ENCODE measurements at regions of chr7 and their contacts with region 1.

Region 1: DNA sequence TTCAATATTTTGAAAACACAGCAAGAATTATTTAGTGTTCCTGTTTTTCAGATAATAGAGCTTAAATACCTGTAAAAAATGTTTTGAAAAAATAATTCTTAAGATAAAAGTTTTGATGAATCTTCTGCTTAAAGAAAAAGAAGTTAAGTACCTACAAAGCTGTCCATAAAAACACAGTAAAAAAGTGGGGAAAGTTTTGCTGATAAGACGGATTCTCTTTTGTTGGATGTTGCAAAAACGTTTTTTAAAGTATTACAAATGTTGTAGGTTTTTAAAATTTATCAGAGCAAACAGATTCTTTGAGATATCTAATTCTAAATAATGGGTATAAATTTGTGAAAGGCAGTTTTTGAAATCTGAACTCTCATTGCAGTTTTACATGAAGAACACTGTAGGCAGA is 12.2 kb downstream of the DMTF1 start:
- DNase-seq: no peak
- H3K4me3 ChIP-seq: no peak overlapping the region
- H3K27ac ChIP-seq: no peak overlapping the region
- H3K4me1 ChIP-seq: peaks cover 0 to 9% (median 3%) of the 10 kb centered on the region in 4 donors
- H3K27me3 ChIP-seq: no peaks in the 10 kb centered on the region
- CTCF ChIP-seq: no peak
- EP300 ChIP-seq: no peak
- POLR2A ChIP-seq: no peak

Region 2: DNA sequence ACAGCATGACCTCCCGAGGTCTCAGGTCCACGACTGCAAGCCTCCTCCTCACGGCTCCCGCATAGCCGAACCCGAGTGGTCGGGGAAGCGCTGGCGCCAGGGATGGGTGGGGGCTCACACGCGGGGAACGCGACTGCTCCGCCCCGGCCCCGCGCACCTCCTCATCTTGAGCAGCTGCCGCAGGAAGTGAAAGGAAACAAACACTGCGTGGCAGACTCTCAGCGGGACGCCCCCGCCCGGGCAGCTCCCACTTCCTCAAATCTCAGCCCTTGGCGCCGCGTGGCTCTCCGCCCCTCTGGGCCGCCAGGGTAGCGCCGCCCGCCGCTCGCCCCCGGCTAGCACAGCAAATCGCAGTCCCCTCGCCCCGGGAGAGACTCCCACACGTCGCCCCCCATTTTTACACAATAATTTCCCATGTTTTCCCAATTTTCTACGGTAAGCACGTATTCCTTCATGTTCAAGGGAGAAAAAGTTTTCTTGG is 55.2 kb after region 1 on chr7 and contains the start of gene TMEM243:
- intact Hi-C with region 1: loop called (anchors 10 kb)
- DNase-seq: peak; percentile 79 to 93
- H3K4me3 ChIP-seq: peak within 1 kb of the TSS; percentile 71 to 95 (median 86)
- H3K27ac ChIP-seq: peak within 1 kb of the TSS; percentile 88 to 94 (median 90)
- H3K4me1 ChIP-seq: peaks cover 25 to 49% (median 39%) of the 10 kb centered on the region in 4 donors
- H3K27me3 ChIP-seq: no peaks in the 10 kb centered on the region
- CTCF ChIP-seq: peak in 1 of 7 experiments; percentile 13
- EP300 ChIP-seq: no peak
- POLR2A ChIP-seq: peak in 1 of 4 donors; percentile 15
- total RNA-seq, gene TMEM243: 4.3 to 68.8 (median 34.8) TPM

Measured in stomach (tissue), 19 donors.